Caco-2 (cell line): ENCODE measurements at regions of chr19 and their contacts with region 1.

Region 1: GRCh38 chr19:1039646-1040475 is at the start of gene ABCA7:
- DNase-seq: peak; percentile 98 to 99
- H3K4me3 ChIP-seq: peak within 1 kb of the TSS; percentile 78
- H3K4me3 Mint-ChIP-seq: peak within 1 kb of the TSS; percentile 91
- H3K27ac Mint-ChIP-seq: peak within 1 kb of the TSS; percentile 91
- H3K4me1 ChIP-seq: peaks cover 10% of the 10 kb centered on the region
- H3K4me1 Mint-ChIP-seq: no peaks in the 10 kb centered on the region
- H3K27me3 ChIP-seq: no peaks in the 10 kb centered on the region
- H3K27me3 Mint-ChIP-seq: no peaks in the 10 kb centered on the region
- CTCF ChIP-seq: no peak
- total RNA-seq, gene ABCA7: 43.5 and 45.9 TPM in 2 replicates

Region 2: DNA sequence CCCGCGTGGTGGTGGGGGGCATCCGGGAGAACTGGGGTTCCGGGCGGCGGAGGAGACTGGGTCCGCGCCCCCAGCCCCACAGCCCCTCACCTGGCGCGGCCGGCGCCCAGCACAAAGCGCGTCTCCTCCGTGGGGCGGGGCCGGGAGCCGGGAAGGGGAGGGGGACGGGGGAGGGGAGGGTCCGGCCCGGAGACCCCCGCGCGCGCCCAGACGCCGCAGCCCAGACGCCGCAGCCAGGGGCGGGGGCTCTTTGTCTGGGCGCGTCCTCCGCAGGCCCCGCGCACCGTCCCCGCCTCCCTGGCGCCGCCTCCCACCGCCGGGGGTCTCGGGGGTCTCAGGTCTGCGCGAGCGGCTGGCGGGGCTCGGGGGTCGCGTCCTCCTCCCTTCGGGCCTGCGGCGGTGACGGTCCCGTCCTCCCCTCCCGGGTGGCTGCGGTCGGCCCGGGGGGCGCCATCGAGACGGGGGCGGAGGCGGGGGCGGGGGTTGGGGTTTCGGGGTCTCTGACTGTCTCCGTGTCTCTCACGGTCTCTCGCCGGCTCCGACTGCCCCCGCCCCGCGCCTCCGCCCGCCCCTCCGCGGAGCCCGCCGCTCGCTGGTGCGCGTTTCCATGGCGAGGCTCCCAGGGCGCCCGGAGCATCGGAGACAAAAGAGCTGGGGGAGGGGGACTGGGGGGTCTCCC is 217.9 kb before region 1 on chr19 and contains the start of gene PLPPR3:
- CTCF ChIA-PET with region 1: no interaction called
- POLR2A ChIA-PET with region 1: no interaction called
- intact Hi-C with region 1: no loop called
- DNase-seq: no peak
- H3K4me3 ChIP-seq: peak within 1 kb of the TSS; percentile 45
- H3K4me3 Mint-ChIP-seq: peak within 1 kb of the TSS; percentile 74
- H3K27ac Mint-ChIP-seq: no peak within 1 kb of the TSS
- H3K4me1 ChIP-seq: no peaks in the 10 kb centered on the region
- H3K4me1 Mint-ChIP-seq: no peaks in the 10 kb centered on the region
- H3K27me3 ChIP-seq: no peaks in the 10 kb centered on the region
- H3K27me3 Mint-ChIP-seq: no peaks in the 10 kb centered on the region
- CTCF ChIP-seq: no peak
- total RNA-seq, gene PLPPR3: 5.1 and 7.1 TPM in 2 replicates

Region 3: GRCh38 chr19:1020868-1021425 is 18.9 kb before region 1 on chr19 and contains the start of gene TMEM259:
- CTCF ChIA-PET with region 1: interaction called, 3 read pairs
- POLR2A ChIA-PET with region 1: interaction called, 7 read pairs
- intact Hi-C with region 1: loop called (anchors 2 kb)
- DNase-seq: peak; percentile 97
- H3K4me3 ChIP-seq: peak within 1 kb of the TSS; percentile 62
- H3K4me3 Mint-ChIP-seq: peak within 1 kb of the TSS; percentile 95
- H3K27ac Mint-ChIP-seq: peak within 1 kb of the TSS; percentile 99
- H3K4me1 ChIP-seq: peaks cover 23% of the 10 kb centered on the region
- H3K4me1 Mint-ChIP-seq: peaks cover 15% of the 10 kb centered on the region
- H3K27me3 ChIP-seq: no peaks in the 10 kb centered on the region
- H3K27me3 Mint-ChIP-seq: no peaks in the 10 kb centered on the region
- CTCF ChIP-seq: no peak
- total RNA-seq, gene TMEM259: 148 and 154 TPM in 2 replicates

Region 4: DNA sequence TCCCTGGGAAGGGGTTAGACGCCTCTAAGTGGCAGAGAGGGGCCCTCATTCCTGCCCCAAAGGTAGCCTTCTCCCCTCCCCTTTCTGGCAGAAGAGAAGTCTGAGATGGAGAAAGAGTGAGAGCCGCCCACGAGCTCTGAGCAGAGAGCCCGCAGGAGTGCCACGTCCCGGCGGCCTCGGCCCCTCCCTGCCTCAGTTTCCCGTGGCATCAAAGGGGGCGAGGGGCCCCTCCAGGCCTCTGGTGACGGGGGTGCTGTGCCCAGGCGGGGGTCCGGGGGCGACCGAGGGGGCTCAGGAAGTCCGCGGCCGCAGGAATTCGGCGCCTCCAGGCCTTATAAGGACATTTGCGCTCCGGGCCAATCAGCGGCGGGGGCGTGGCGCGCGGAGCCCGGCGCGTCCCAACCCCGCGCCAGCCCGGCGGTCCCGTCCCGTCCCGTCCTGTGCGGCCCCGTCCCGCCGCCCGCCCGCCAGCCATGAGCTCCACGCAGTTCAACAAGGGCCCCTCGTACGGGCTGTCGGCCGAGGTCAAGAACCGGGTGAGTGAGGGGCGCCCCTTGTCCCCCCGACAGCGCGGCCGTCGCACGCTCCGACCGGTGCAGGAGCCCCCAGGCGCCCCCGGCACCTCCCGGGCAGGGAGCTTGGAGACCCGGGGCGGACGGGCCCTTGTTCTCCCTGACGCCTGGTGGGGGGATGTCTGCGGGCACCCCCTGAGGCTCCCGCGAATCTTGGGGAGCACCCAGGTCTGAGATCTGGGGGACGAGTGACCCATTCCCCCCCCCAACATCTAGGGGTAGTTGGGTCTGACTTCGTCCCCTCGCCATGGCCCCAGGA is 13.5 kb before region 1 on chr19 and contains the start of gene CNN2:
- CTCF ChIA-PET with region 1: interaction called, 3 read pairs
- POLR2A ChIA-PET with region 1: interaction called, 7 read pairs
- intact Hi-C with region 1: loop called (anchors 1 kb)
- DNase-seq: peak; percentile 81 to 88
- H3K4me3 ChIP-seq: peak within 1 kb of the TSS; percentile 73
- H3K4me3 Mint-ChIP-seq: peak within 1 kb of the TSS; percentile 81
- H3K27ac Mint-ChIP-seq: peak within 1 kb of the TSS; percentile 95
- H3K4me1 ChIP-seq: peaks cover 7% of the 10 kb centered on the region; the same call in 1 of the 2 replicates
- H3K4me1 Mint-ChIP-seq: peaks cover 17% of the 10 kb centered on the region
- H3K27me3 ChIP-seq: no peaks in the 10 kb centered on the region
- H3K27me3 Mint-ChIP-seq: no peaks in the 10 kb centered on the region
- CTCF ChIP-seq: no peak
- total RNA-seq, gene CNN2: 194 and 221 TPM in 2 replicates

Region 5: DNA sequence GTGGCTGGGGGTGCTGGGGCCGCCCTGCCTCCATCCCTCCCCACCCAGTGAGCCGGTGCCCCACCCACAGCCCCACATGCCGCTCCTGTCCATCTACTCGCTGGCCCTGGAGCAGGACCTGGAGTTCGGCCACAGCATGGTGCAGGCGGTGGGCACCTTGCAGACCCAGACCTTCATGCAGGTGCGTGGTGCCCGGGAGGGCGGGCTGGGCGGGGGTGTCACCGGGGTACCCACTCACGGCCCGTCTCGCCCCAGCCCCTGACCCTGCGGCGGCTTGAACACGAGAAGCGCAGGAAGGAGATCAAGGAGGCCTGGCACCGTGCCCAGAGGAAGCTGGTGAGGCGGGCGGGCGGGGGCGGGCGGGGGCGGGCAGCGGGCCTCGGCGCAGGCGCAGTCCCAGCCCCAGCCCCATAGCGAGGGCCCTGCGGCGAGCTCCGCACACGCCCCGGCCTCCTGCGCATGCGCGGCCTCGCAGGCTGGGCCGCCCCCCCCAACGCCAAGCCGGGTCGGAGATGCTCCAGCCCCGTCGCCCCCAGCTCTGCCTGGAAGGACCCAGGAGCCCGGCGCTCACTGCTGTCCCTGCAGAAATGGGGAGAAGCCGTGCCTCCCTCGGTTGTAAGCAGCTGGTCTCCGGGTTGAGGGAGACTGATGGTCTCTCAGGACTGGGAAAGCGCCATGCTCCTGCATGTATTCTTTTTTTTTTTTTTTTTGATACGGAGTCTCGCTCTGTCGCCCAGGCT is 34.9 kb after region 1 on chr19:
- CTCF ChIA-PET with region 1: no interaction called
- POLR2A ChIA-PET with region 1: no interaction called
- intact Hi-C with region 1: no loop called
- DNase-seq: no peak
- H3K4me3 ChIP-seq: no peak overlapping the region
- H3K4me3 Mint-ChIP-seq: no peak overlapping the region
- H3K27ac Mint-ChIP-seq: peak overlapping the region; percentile 90
- H3K4me1 ChIP-seq: peaks cover 9% of the 10 kb centered on the region; the same call in 1 of the 2 replicates
- H3K4me1 Mint-ChIP-seq: peaks cover 15% of the 10 kb centered on the region
- H3K27me3 ChIP-seq: no peaks in the 10 kb centered on the region
- H3K27me3 Mint-ChIP-seq: no peaks in the 10 kb centered on the region
- CTCF ChIP-seq: no peak

Region 6: DNA sequence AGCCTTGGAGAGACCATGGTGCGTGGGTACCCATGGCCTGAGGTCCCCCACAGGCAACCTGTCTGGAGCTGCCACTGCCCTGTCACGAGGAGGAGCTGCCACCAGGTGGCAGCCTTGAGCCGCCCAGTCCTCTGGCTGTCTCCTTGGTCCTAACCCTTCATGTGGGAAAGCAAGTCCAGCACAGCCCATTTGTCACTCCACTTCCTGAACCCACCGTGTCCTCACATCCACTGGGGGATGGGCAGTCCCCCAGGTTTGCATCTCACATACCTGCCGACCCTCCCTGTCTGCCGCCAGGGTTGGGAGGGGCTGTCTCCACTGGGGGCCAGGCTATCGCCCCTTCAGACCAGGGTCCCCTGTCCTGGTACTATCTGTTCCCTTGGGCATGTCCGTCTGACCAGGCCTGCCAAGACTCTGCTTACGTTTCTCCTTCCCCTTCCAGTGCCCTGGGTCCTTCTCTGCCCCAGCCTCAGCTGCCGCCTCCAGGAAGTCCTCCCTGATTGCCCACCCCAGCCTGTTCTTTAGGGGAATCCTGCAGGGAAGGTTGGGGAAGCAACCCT is 240.0 kb after region 1 on chr19:
- CTCF ChIA-PET with region 1: no interaction called
- POLR2A ChIA-PET with region 1: no interaction called
- intact Hi-C with region 1: no loop called
- DNase-seq: peak; percentile 83 to 89
- H3K4me3 ChIP-seq: no peak overlapping the region
- H3K4me3 Mint-ChIP-seq: no peak overlapping the region
- H3K27ac Mint-ChIP-seq: peak overlapping the region; percentile 12
- H3K4me1 ChIP-seq: peaks cover 29% of the 10 kb centered on the region
- H3K4me1 Mint-ChIP-seq: peaks cover 24% of the 10 kb centered on the region
- H3K27me3 ChIP-seq: no peaks in the 10 kb centered on the region
- H3K27me3 Mint-ChIP-seq: no peaks in the 10 kb centered on the region
- CTCF ChIP-seq: peak; percentile 92 to 94

Region 7: DNA sequence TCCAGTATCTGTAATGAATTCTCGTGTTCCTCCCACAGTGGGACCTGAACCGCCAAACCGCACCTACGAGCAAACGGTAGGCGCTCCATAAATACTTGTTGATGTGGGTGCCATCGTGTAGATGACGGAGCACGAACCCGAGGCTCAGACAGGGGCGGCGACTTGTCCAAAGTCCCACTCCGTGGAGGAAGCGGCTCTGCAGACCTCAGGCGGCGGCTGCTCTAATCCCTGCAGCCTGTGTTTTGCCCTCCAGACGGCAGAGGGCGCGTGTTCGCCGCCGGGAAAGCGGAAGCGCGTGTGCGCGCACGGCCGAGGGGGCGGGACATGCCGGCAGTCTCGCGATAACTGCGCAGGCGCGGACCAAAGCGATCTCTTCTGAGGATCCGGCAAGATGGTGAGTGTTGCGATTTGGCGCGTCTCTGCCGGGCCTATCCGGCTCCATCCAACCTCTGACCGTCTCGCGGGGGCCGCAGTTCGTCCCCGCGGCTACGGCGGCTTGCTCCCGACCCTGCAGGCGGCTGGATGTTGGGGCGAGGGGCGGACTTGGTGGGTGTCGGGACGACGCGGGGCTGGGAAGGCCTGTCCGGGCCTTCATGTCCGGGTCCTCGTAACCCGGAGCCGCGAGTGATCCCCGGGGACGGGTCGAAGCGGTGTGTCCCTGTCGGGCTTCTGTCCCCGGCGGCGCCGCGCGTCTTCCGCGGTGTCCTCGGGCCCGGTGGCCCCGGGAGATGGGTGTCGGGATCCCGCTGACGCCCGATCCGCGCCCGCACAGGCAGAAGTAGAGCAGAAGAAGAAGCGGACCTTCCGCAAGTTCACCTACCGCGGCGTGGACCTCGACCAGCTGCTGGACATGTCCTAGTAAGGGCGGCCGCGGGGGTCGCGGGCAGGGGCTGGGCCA is 398.4 kb after region 1 on chr19 and contains the start of gene RPS15:
- CTCF ChIA-PET with region 1: no interaction called
- POLR2A ChIA-PET with region 1: no interaction called
- intact Hi-C with region 1: no loop called
- DNase-seq: peak; percentile 93 to 94
- H3K4me3 ChIP-seq: peak within 1 kb of the TSS; percentile 67
- H3K4me3 Mint-ChIP-seq: peak within 1 kb of the TSS; percentile 87
- H3K27ac Mint-ChIP-seq: peak within 1 kb of the TSS; percentile 96
- H3K4me1 ChIP-seq: peaks cover 28% of the 10 kb centered on the region
- H3K4me1 Mint-ChIP-seq: peaks cover 10% of the 10 kb centered on the region
- H3K27me3 ChIP-seq: no peaks in the 10 kb centered on the region
- H3K27me3 Mint-ChIP-seq: no peaks in the 10 kb centered on the region
- CTCF ChIP-seq: peak; percentile 92 to 93
- total RNA-seq, gene RPS15: 1,192 and 1,341 TPM in 2 replicates